ENCODE measurements at regions of chr9 and their contacts with region 1.

Region 1: GRCh38 chr9:113410207-113410864 is at the starts of genes C9orf43 and POLE3:
- DNase-seq: peak; percentile 97
- H3K4me3 ChIP-seq: peak within 1 kb of the TSS; percentile 88
- H3K27ac ChIP-seq: peak within 1 kb of the TSS; percentile 97
- H3K4me1 ChIP-seq: peaks cover 46% of the 10 kb centered on the region
- CTCF ChIP-seq: no peak
- total RNA-seq, gene C9orf43: 1.8 and 3.0 TPM in 2 replicates
- total RNA-seq, gene POLE3: 108 and 132 TPM in 2 replicates

Region 2: GRCh38 chr9:113221003-113221799 is 189.1 kb before region 1 on chr9 and contains the starts of genes FKBP15 and SLC31A1:
- CTCF ChIA-PET with region 1: no interaction called
- POLR2A ChIA-PET with region 1: no interaction called
- intact Hi-C with region 1: loop called (anchors 1 kb)
- DNase-seq: peak; percentile 98
- H3K4me3 ChIP-seq: peak within 1 kb of the TSS; percentile 92
- H3K27ac ChIP-seq: peak within 1 kb of the TSS; percentile 89
- H3K4me1 ChIP-seq: peaks cover 40% of the 10 kb centered on the region
- CTCF ChIP-seq: no peak
- total RNA-seq, gene FKBP15: 25.5 and 39.9 TPM in 2 replicates
- total RNA-seq, gene SLC31A1: 3.9 and 4.7 TPM in 2 replicates

Region 3: GRCh38 chr9:113275157-113276131 is 134.9 kb before region 1 on chr9 and contains the starts of genes CDC26 and PRPF4:
- CTCF ChIA-PET with region 1: no interaction called
- POLR2A ChIA-PET with region 1: interaction called, 5 read pairs
- intact Hi-C with region 1: loop called (anchors 1 kb)
- DNase-seq: peak; percentile 97
- H3K4me3 ChIP-seq: peak within 1 kb of the TSS; percentile 84
- H3K27ac ChIP-seq: peak within 1 kb of the TSS; percentile 68
- H3K4me1 ChIP-seq: peaks cover 29% of the 10 kb centered on the region
- CTCF ChIP-seq: no peak
- total RNA-seq, gene CDC26: 29.9 and 42.5 TPM in 2 replicates
- total RNA-seq, gene PRPF4: 27.4 and 27.8 TPM in 2 replicates

Region 4: DNA sequence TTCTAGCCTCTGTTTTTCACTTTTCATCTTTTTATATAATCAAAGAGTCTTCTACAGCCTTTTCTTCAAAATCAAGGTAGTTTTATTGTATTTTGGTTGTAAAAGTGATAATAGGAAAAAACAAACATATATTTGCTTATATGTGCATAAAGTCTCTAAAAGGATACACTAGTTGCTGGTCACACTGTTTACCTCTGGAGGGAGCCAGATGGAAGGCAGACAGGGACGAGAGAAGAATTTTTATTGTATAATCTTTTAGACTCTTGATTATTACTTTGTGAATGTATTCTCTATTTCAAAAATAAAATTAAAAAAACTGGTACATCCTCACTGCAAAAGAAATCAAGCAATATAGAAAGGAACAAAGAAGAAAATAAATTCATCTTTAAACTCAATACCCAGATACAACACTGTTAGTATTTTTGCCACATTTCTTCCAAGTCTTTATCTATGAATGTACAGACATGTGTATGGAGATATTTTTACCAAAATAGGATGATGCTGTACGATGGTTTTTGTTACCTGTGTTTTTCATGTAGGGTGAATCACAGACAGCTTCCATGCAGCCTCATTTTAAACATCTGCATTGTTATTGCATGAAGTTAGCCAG is 101.0 kb before region 1 on chr9:
- CTCF ChIA-PET with region 1: no interaction called
- POLR2A ChIA-PET with region 1: no interaction called
- intact Hi-C with region 1: loop called (anchors 1 kb)
- DNase-seq: peak; percentile 44
- H3K4me3 ChIP-seq: no peak overlapping the region
- H3K27ac ChIP-seq: no peak overlapping the region
- H3K4me1 ChIP-seq: no peaks in the 10 kb centered on the region
- CTCF ChIP-seq: peak; percentile 95

Region 5: DNA sequence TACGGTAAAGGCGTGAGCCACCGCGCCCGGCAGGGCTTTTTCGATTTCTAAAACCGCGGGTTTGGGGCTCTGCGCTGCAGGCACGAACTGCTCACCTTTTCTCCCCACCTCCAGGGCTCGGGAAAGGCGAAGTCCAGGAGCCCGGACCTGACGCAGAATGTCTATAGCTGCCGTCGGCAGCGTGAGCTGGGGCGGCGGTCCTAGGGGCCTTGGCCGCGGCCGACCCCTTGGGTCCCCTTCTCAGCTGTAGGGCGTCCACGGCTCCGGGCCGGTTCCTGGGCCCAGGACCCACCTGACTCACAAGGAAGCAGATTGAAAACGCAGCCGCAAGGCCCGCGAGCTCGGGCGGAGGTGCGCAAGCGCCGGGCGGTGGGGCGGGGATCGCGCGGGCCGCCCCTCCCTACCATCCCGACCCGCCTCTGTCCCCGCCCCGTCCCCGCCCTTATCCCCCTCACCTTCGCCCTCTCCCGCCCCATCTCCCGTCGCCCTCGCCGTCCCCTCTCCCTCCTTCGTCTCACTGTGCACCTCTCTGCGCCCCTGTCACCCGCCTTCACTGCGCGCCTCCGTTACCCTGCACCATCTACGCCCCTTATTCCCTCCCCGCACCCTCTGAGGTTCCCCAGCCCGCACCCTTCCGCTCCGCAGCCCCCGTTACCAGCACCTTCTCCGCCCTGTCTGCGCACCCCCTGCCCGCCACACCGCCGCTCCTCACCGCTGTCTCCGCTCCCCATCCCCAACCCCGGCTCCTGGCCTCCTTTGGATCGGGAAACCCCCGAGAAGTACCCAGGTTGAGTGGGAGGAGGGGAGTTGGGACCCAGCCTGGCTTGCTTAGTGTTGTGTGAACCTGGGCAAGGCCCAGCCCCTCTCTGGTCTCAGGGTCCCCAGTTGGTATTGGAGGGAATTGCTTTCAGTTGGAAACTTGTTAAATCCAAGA is 33.4 kb before region 1 on chr9 and contains the start of gene HDHD3:
- CTCF ChIA-PET with region 1: no interaction called
- POLR2A ChIA-PET with region 1: no interaction called
- intact Hi-C with region 1: loop called (anchors 2 kb)
- DNase-seq: peak; percentile 86
- H3K4me3 ChIP-seq: peak within 1 kb of the TSS; percentile 76
- H3K27ac ChIP-seq: no peak within 1 kb of the TSS
- H3K4me1 ChIP-seq: peaks cover 22% of the 10 kb centered on the region
- CTCF ChIP-seq: no peak
- total RNA-seq, gene HDHD3: 11.9 and 18.1 TPM in 2 replicates

Region 6: DNA sequence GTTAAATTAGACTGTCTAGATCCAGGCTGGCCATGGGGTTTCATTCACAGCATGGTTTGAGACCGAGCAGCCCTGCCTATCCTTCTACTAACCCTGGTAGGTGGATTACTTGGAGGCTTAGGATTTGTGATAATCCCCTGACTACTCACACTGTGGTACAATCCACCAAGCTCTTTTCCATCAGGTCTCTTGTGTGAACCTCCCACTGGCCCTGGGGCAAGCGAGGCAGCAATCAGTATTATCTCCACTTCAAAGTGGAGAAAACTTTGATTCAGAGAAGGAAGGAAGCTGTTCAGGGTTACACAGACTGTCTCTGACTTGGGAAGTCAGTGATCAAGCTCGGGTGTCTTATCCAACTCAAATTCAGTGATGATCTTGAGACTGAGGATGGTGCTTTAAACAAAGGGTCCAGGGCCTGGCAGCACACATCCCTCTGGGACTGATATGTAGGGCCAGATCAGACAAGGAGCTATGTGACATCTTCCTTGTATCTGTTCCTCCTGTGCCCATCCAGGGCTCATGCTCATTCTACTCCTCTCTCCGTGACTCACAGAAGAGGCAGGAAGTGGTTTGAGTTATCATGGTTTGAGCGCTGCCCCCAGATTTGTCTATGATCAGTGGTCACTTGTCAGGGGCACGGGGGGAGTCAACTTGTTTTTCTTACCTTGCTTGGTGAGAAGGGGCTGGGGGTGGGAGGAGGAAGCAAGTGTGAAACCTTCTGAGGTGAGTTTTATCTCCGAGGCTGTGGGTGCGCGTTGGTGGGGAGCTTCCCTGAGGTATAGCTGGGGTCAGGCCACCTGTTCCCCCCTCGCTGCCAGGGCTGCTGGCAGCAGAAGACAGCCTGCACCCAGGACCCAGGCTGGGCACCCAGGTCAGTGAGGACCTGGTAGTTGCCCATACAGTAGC is 101.8 kb after region 1 on chr9:
- CTCF ChIA-PET with region 1: interaction called, 3 read pairs
- POLR2A ChIA-PET with region 1: interaction called, 6 read pairs
- intact Hi-C with region 1: loop called (anchors 1 kb)
- DNase-seq: peak; percentile 38
- H3K4me3 ChIP-seq: no peak overlapping the region
- H3K27ac ChIP-seq: no peak overlapping the region
- H3K4me1 ChIP-seq: peaks cover 31% of the 10 kb centered on the region
- CTCF ChIP-seq: no peak

Region 7: GRCh38 chr9:114291064-114291474 is 880.7 kb after region 1 on chr9:
- CTCF ChIA-PET with region 1: no interaction called
- POLR2A ChIA-PET with region 1: no interaction called
- intact Hi-C with region 1: no loop called
- DNase-seq: peak; percentile 61
- H3K4me3 ChIP-seq: no peak overlapping the region
- H3K27ac ChIP-seq: no peak overlapping the region
- H3K4me1 ChIP-seq: no peaks in the 10 kb centered on the region
- CTCF ChIP-seq: peak; percentile 92

Region 8: GRCh38 chr9:114372921-114373448 is 962.6 kb after region 1 on chr9:
- CTCF ChIA-PET with region 1: no interaction called
- POLR2A ChIA-PET with region 1: no interaction called
- intact Hi-C with region 1: loop called (anchors 10 kb)
- DNase-seq: peak; percentile 99
- H3K4me3 ChIP-seq: peak overlapping the region; percentile 56
- H3K27ac ChIP-seq: peak overlapping the region; percentile 99
- H3K4me1 ChIP-seq: peaks cover 94% of the 10 kb centered on the region
- CTCF ChIP-seq: no peak

Measured in OCI-LY7 (cell line).